ENCODE measurements at regions of chr12 and their contacts with region 1.

Region 1: DNA sequence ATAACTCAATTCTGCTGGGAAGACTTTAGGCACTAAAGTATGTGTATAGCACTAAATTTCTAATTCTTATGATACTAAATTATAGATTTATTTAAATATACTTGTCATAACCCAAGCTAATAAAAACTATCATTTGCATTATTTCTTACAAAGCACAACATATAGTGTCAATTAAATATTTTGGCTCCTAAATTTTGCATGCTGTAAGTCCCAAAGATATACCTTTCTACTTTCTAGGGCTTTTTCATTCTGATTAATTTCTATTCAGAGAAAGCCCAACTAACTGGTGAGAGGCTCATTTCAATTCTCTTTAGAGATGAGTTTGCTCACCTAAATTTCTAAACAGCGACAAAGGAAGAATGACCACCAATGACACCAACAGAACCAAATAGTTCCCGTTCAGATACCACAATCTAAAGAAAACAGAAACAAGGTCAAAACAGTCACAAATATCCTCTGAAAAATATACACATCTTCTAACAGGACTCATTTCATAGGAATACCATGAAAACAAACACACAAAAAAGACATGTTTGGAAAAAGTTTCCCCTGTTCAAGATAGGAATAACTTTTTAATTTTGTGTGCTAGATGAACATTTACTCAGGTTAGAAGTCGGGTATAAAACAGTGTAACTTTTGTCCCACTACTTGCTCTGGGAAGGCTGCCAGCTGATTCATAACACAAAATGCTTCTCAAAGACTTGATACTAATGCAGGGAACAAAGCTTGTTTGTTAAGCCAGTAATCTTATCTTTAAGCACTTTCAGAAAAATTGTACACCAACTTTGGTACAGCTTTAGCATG is 7.6 kb downstream of the SLC38A2 start:
- DNase-seq: peak; percentile 58
- H3K4me3 ChIP-seq: no peak overlapping the region
- H3K27ac ChIP-seq: no peak overlapping the region
- H3K4me1 ChIP-seq: peaks cover 23% of the 10 kb centered on the region
- H3K27me3 ChIP-seq: no peaks in the 10 kb centered on the region
- CTCF ChIP-seq: no peak
- POLR2A ChIP-seq: no peak

Region 2: GRCh38 chr12:46124848-46125619 is 239.9 kb before region 1 on chr12:
- intact Hi-C with region 1: loop called (anchors 2 kb)
- DNase-seq: peak; percentile 52
- H3K4me3 ChIP-seq: no peak overlapping the region
- H3K27ac ChIP-seq: no peak overlapping the region
- H3K4me1 ChIP-seq: no peaks in the 10 kb centered on the region
- H3K27me3 ChIP-seq: no peaks in the 10 kb centered on the region
- CTCF ChIP-seq: peak; percentile 57 to 80 (median 76)
- POLR2A ChIP-seq: no peak

Region 3: DNA sequence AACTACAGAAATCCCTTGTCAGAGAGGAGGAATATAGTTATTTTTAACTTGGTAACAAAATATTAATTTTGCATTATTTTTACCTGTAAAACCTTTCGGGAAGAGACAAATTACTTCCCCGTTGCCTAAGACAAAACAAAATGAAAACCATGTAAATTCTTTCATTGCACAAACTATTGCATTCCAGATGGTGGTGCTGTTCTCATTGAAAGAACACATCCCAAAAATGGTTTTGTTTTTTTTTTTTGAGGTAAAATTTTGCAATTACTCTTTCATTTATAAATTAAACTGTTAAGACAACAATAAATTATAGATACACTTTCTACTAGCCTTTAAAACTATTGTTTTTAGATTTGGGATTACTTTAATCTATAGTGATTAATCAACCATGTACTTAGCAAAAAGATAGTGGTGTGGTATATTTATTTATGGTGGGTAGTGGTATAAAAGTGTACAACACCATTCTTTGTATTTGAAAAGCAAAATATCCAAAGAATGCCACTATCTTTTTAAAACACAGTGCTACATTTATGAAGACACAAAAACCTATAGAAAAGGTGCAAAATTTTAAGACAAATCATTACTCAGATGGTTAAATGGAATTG is 211.6 kb before region 1 on chr12:
- intact Hi-C with region 1: loop called (anchors 10 kb)
- DNase-seq: no peak
- H3K4me3 ChIP-seq: no peak overlapping the region
- H3K27ac ChIP-seq: no peak overlapping the region
- H3K4me1 ChIP-seq: no peaks in the 10 kb centered on the region
- H3K27me3 ChIP-seq: no peaks in the 10 kb centered on the region
- CTCF ChIP-seq: peak in 3 of 4 experiments; percentile 49 to 59 (median 53)
- POLR2A ChIP-seq: no peak

Region 4: GRCh38 chr12:46419675-46420074 is 54.7 kb after region 1 on chr12:
- intact Hi-C with region 1: no loop called
- DNase-seq: no peak
- H3K4me3 ChIP-seq: no peak overlapping the region
- H3K27ac ChIP-seq: no peak overlapping the region
- H3K4me1 ChIP-seq: no peaks in the 10 kb centered on the region
- H3K27me3 ChIP-seq: no peaks in the 10 kb centered on the region
- CTCF ChIP-seq: no peak
- POLR2A ChIP-seq: no peak

Region 5: GRCh38 chr12:47672068-47672467 is 1307.1 kb after region 1 on chr12:
- intact Hi-C with region 1: no loop called
- DNase-seq: no peak
- H3K4me3 ChIP-seq: no peak overlapping the region
- H3K27ac ChIP-seq: no peak overlapping the region
- H3K4me1 ChIP-seq: no peaks in the 10 kb centered on the region
- H3K27me3 ChIP-seq: no peaks in the 10 kb centered on the region
- CTCF ChIP-seq: no peak
- POLR2A ChIP-seq: no peak